ENCODE measurements at regions of chr4 and their contacts with region 1.

Region 1: GRCh38 chr4:83716874-83717273 is 181.0 kb downstream of the GPAT3 start:
- DNase-seq: no peak
- ATAC-seq: no peak
- H3K4me3 ChIP-seq: no peak overlapping the region
- H3K27ac ChIP-seq: no peak overlapping the region
- H3K4me1 ChIP-seq: no peaks in the 10 kb centered on the region
- H3K27me3 ChIP-seq: peaks cover 0 to under 1% (median 0%) of the 10 kb centered on the region in 7 donors
- CTCF ChIP-seq: no peak

Region 2: GRCh38 chr4:83677656-83678055 is 39.2 kb before region 1 on chr4:
- intact Hi-C with region 1: no loop called
- DNase-seq: no peak
- ATAC-seq: no peak
- H3K4me3 ChIP-seq: no peak overlapping the region
- H3K27ac ChIP-seq: peak overlapping the region in 1 of 10 donors; percentile 6
- H3K4me1 ChIP-seq: no peaks in the 10 kb centered on the region
- H3K27me3 ChIP-seq: peaks cover 0 to 10% (median under 1%) of the 10 kb centered on the region in 7 donors
- CTCF ChIP-seq: no peak

Region 3: DNA sequence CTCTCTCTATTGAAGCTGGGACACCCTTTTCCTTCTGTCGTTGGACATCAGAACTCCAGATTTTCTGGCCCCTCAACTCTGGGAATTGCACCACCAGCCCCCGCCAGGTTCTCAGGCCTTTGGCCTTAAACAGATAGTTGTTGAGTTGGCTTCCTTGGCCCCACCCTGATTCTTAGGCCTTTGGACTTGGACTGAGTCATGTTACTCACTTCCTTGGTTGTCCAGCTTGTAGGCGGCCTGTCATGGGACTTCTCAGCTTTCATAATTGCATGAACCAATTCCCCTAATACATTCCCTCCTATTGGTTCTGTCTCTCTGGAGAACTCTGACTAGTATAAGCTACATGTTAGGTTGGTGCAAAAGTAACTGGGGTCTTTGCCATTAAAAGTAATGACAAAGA is 14.7 kb after region 1 on chr4:
- intact Hi-C with region 1: loop called in 1 of 10 experiments (anchors 1 kb)
- DNase-seq: no peak
- ATAC-seq: no peak
- H3K4me3 ChIP-seq: no peak overlapping the region
- H3K27ac ChIP-seq: no peak overlapping the region
- H3K4me1 ChIP-seq: no peaks in the 10 kb centered on the region
- H3K27me3 ChIP-seq: peaks cover 0 to 6% (median 0%) of the 10 kb centered on the region in 7 donors
- CTCF ChIP-seq: no peak

Region 4: GRCh38 chr4:83751336-83751943 is 34.6 kb after region 1 on chr4:
- intact Hi-C with region 1: no loop called
- DNase-seq: no peak
- ATAC-seq: no peak
- H3K4me3 ChIP-seq: no peak overlapping the region
- H3K27ac ChIP-seq: no peak overlapping the region
- H3K4me1 ChIP-seq: no peaks in the 10 kb centered on the region
- H3K27me3 ChIP-seq: no peaks in the 10 kb centered on the region
- CTCF ChIP-seq: no peak

Region 5: GRCh38 chr4:83830138-83830888 is 113.4 kb after region 1 on chr4:
- intact Hi-C with region 1: no loop called
- DNase-seq: peak in 1 of 2 donors; percentile 6
- ATAC-seq: peak; percentile 42 to 100 (median 70)
- H3K4me3 ChIP-seq: no peak overlapping the region
- H3K27ac ChIP-seq: peak overlapping the region in 2 of 10 donors; percentile 36 to 41
- H3K4me1 ChIP-seq: peaks cover 0 to 17% (median 10%) of the 10 kb centered on the region in 9 donors
- H3K27me3 ChIP-seq: no peaks in the 10 kb centered on the region
- CTCF ChIP-seq: no peak

Region 6: GRCh38 chr4:83905952-83906351 is 189.1 kb after region 1 on chr4:
- intact Hi-C with region 1: no loop called
- DNase-seq: no peak
- ATAC-seq: no peak
- H3K4me3 ChIP-seq: no peak overlapping the region
- H3K27ac ChIP-seq: no peak overlapping the region
- H3K4me1 ChIP-seq: no peaks in the 10 kb centered on the region
- H3K27me3 ChIP-seq: peaks cover 0 to 12% (median 0%) of the 10 kb centered on the region in 7 donors
- CTCF ChIP-seq: peak in 1 of 9 donors; percentile 6

Measured in heart right ventricle (tissue), 16 donors.